ENCODE measurements at regions of chr12 and their contacts with region 1.

Region 1: GRCh38 chr12:124453419-124454351 is 113.7 kb downstream of the NCOR2 start:
- DNase-seq: peak; percentile 83 to 91
- ATAC-seq: peak; percentile 68 to 86 (median 78)
- H3K4me3 ChIP-seq: peak overlapping the region; percentile 27
- H3K4me3 Mint-ChIP-seq: peak overlapping the region; percentile 80
- H3K27ac ChIP-seq: peak overlapping the region; percentile 96
- H3K27ac Mint-ChIP-seq: peak overlapping the region; percentile 73 to 96
- H3K4me1 ChIP-seq: peaks cover 95% of the 10 kb centered on the region
- H3K4me1 Mint-ChIP-seq: peaks cover 66 to 85% of the 10 kb centered on the region in 2 donors
- H3K27me3 ChIP-seq: no peaks in the 10 kb centered on the region
- H3K27me3 Mint-ChIP-seq: no peaks in the 10 kb centered on the region
- CTCF ChIP-seq: no peak

Region 2: GRCh38 chr12:124388679-124389536 is 64.8 kb before region 1 on chr12:
- intact Hi-C with region 1: loop called (anchors 10 kb)
- DNase-seq: peak; percentile 75 to 77
- ATAC-seq: peak; percentile 75 to 80 (median 80)
- H3K4me3 ChIP-seq: peak overlapping the region; percentile 36
- H3K4me3 Mint-ChIP-seq: peak overlapping the region; percentile 80
- H3K27ac ChIP-seq: peak overlapping the region; percentile 53
- H3K27ac Mint-ChIP-seq: peak overlapping the region; percentile 68 to 80
- H3K4me1 ChIP-seq: peaks cover 59% of the 10 kb centered on the region
- H3K4me1 Mint-ChIP-seq: peaks cover 28 to 56% of the 10 kb centered on the region in 2 donors
- H3K27me3 ChIP-seq: no peaks in the 10 kb centered on the region
- H3K27me3 Mint-ChIP-seq: no peaks in the 10 kb centered on the region
- CTCF ChIP-seq: no peak

Measured in natural killer cell (primary cell).